Common myeloid progenitor, CD34-positive (primary cell): ENCODE measurements at regions of chr9 and their contacts with region 1.

Region 1: DNA sequence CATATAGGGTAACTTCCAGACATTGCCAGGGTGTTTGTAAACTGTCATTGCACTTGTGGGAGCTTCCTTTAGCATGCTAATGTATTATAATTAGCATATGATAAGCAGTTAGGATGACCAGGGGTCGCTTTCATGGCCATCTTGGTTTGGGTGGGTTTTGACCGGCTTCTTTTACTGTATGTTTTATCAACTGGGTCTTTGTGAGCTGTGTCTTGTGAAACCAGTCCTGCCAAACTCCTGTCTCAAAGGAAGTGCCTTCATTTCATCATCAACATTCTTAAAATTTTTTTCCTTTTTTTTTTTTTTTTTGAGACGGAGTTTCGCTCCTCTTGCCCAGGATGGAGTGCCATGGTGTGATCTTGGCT is 11.9 kb upstream of the MELK start:
- DNase-seq: no peak
- H3K4me3 ChIP-seq: no peak overlapping the region
- H3K27ac ChIP-seq: no peak overlapping the region
- H3K4me1 ChIP-seq: no peaks in the 10 kb centered on the region
- H3K27me3 ChIP-seq: no peaks in the 10 kb centered on the region

Region 2: DNA sequence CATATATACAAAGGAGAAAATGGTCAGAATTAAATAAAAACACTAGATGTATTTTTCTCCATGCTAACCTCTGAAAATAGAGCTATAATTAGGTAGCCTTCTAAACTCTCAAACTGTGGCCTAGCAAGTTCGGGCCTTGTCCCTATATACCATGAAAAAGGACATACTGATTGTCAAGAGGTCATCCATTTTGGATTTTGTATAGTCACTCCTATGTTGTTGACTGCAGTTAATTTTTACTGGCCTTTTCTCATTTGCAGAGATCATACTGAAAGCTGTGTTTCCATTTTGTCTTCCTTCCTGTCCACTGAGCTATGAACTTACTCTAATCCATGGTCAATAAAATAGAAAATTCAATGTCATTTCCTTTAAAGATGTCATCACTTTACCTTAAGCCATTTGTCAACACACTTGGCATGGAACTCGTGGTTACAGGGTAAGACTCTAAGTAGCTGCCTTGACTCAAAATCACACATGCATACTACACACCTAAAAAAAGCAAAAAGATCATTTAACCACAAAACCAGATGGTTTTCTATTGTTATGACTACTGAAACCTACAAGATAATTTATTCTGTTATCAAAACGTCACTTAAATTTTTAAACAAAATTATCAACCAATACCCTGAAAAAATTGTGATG is 218.8 kb before region 1 on chr9:
- CTCF ChIA-PET with region 1: no interaction called
- POLR2A ChIA-PET with region 1: no interaction called
- DNase-seq: peak in 2 of 3 donors; percentile 7 to 11
- H3K4me3 ChIP-seq: no peak overlapping the region
- H3K27ac ChIP-seq: no peak overlapping the region
- H3K4me1 ChIP-seq: no peaks in the 10 kb centered on the region
- H3K27me3 ChIP-seq: no peaks in the 10 kb centered on the region

Region 3: DNA sequence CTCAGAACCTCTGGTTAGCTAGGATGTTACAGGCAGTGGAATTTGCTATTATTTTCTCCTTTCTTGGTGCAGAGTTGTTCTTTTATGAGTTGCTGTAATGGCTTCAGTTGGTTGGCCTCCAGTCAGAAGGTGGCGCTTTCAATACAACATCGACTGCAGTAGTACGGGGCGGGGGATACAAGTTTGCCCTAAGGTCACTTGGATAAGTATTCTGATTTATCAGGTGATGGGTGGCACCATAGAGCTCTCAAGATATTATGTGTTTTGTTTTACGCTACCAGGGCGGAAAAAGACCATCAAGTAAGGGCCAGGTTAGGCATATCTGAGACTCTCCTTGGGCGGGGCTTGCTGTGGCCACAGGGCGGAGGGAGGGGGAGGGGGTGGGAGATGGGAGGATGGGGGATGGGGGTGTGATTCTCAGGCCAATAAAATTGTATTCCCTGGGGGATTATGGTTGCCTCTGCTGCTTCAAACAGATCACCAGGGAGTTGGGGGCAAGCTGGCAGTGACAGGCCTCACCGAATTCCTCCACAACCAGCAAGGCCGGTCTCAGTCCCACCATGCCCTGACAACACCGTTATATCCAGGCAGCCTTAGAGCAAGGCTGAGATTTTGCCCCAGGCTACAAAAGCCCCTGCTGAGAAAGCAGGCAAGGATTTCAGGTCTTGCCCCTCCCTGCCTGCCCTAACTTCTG is 144.9 kb before region 1 on chr9:
- CTCF ChIA-PET with region 1: interaction called, 27 read pairs
- POLR2A ChIA-PET with region 1: no interaction called
- DNase-seq: no peak
- H3K4me3 ChIP-seq: no peak overlapping the region
- H3K27ac ChIP-seq: no peak overlapping the region
- H3K4me1 ChIP-seq: no peaks in the 10 kb centered on the region
- H3K27me3 ChIP-seq: no peaks in the 10 kb centered on the region

Region 4: GRCh38 chr9:36436909-36437308 is 123.9 kb before region 1 on chr9:
- CTCF ChIA-PET with region 1: interaction called, 13 read pairs
- POLR2A ChIA-PET with region 1: no interaction called
- DNase-seq: no peak
- H3K4me3 ChIP-seq: no peak overlapping the region
- H3K27ac ChIP-seq: no peak overlapping the region
- H3K4me1 ChIP-seq: peaks cover 0 to 4% (median 2%) of the 10 kb centered on the region in 4 experiments
- H3K27me3 ChIP-seq: no peaks in the 10 kb centered on the region

Region 5: DNA sequence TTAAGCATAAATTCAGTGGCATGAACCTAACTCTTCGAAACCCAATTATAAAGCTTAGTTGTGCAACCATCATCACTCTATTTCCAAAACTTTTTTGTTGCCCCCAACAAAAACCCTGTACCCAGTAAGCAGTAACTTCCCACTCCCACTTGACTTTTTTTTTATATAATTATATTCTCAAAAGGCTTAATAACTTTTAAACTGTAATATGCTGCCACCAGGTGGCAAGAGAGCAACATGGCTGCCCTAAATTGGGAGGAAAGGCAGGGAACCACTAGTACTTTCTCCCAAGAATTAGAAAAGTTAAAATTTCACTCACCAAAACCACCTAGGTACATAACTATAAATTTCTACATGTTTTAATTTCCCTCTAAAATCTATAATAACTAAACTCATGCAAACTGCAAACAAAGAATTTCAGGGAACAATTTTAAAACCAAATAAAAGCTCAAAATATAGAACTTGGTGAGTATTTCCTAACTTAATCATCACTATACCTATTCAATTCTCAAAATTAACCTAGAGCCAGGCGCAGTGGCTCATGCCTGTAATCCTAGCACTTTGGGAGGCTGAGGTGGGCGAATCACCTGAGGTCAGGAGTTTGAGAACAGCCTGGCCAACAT is 110.6 kb before region 1 on chr9:
- CTCF ChIA-PET with region 1: interaction called, 24 read pairs
- POLR2A ChIA-PET with region 1: no interaction called
- DNase-seq: peak; percentile 57 to 64 (median 59)
- H3K4me3 ChIP-seq: no peak overlapping the region
- H3K27ac ChIP-seq: no peak overlapping the region
- H3K4me1 ChIP-seq: no peaks in the 10 kb centered on the region
- H3K27me3 ChIP-seq: no peaks in the 10 kb centered on the region

Region 6: DNA sequence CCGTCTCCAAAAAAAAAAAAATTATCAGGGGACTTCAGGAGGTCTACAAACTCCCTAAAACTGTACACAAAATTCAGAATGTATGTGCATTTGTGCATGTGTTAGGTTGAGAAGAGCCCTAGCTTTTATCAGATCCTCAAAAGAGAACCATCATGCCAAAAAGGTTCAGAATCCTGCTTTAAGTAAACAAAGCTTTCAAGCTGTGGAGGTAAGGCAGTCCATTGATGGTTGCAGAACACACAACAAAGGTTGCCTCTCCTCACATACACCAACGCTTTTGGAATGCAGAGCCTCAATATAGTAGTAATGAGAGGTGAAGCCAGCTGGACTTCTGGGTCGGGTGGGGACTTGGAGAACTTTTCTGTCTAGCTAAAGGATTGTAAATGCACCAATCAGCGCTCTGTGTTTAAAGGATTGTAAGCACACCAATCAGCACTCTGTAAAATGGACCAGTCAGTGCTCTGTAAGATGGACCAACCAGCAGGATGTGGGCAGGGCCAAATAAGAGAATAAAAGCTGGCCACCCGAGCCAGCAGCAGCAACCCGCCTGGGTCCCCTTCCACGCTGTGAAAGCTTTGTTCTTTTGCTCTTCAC is 102.9 kb before region 1 on chr9:
- CTCF ChIA-PET with region 1: interaction called, 18 read pairs
- POLR2A ChIA-PET with region 1: no interaction called
- DNase-seq: no peak
- H3K4me3 ChIP-seq: peak overlapping the region in 4 of 7 experiments; percentile 3 to 56 (median 38)
- H3K27ac ChIP-seq: no peak overlapping the region
- H3K4me1 ChIP-seq: peaks cover 15 to 41% (median 24%) of the 10 kb centered on the region in 4 experiments
- H3K27me3 ChIP-seq: no peaks in the 10 kb centered on the region

Region 7: GRCh38 chr9:36590231-36590630 is 29.4 kb after region 1 on chr9:
- CTCF ChIA-PET with region 1: no interaction called
- POLR2A ChIA-PET with region 1: no interaction called
- DNase-seq: no peak
- H3K4me3 ChIP-seq: no peak overlapping the region
- H3K27ac ChIP-seq: no peak overlapping the region
- H3K4me1 ChIP-seq: no peaks in the 10 kb centered on the region
- H3K27me3 ChIP-seq: no peaks in the 10 kb centered on the region

Region 8: GRCh38 chr9:36698984-36699383 is 138.1 kb after region 1 on chr9:
- CTCF ChIA-PET with region 1: no interaction called
- POLR2A ChIA-PET with region 1: no interaction called
- DNase-seq: no peak
- H3K4me3 ChIP-seq: no peak overlapping the region
- H3K27ac ChIP-seq: no peak overlapping the region
- H3K4me1 ChIP-seq: no peaks in the 10 kb centered on the region
- H3K27me3 ChIP-seq: no peaks in the 10 kb centered on the region